ENCODE measurements at regions of chr2 and their contacts with region 1.

Region 1: GRCh38 chr2:2950403-2950952 is 427.1 kb downstream of the EIPR1 start:
- DNase-seq: no peak
- H3K4me3 ChIP-seq: no peak overlapping the region
- H3K27ac ChIP-seq: no peak overlapping the region
- H3K4me1 ChIP-seq: no peaks in the 10 kb centered on the region
- H3K27me3 ChIP-seq: peaks cover 84% of the 10 kb centered on the region
- CTCF ChIP-seq: no peak

Region 2: GRCh38 chr2:2974982-2975381 is 24.5 kb after region 1 on chr2:
- CTCF ChIA-PET with region 1: interaction called, 19 read pairs
- POLR2A ChIA-PET with region 1: no interaction called
- intact Hi-C with region 1: no loop called
- DNase-seq: no peak
- H3K4me3 ChIP-seq: no peak overlapping the region
- H3K27ac ChIP-seq: no peak overlapping the region
- H3K4me1 ChIP-seq: no peaks in the 10 kb centered on the region
- H3K27me3 ChIP-seq: peaks cover 37% of the 10 kb centered on the region; the same call in 1 of the 2 replicates
- CTCF ChIP-seq: no peak

Measured in PC-9 (cell line).